ENCODE measurements at regions of chr4 and their contacts with region 1.

Region 1: GRCh38 chr4:110019153-110019552 is 106.5 kb downstream of the EGF start:
- DNase-seq: no peak
- ATAC-seq: no peak
- H3K4me3 ChIP-seq: no peak overlapping the region
- H3K27ac ChIP-seq: no peak overlapping the region
- H3K4me1 ChIP-seq: no peaks in the 10 kb centered on the region
- H3K27me3 ChIP-seq: no peaks in the 10 kb centered on the region
- CTCF ChIP-seq: no peak

Region 2: GRCh38 chr4:110155654-110156053 is 136.5 kb after region 1 on chr4:
- CTCF ChIA-PET with region 1: no interaction called
- POLR2A ChIA-PET with region 1: no interaction called
- intact Hi-C with region 1: no loop called
- DNase-seq: no peak
- ATAC-seq: no peak
- H3K4me3 ChIP-seq: no peak overlapping the region
- H3K27ac ChIP-seq: no peak overlapping the region
- H3K4me1 ChIP-seq: peaks cover 23% of the 10 kb centered on the region
- H3K27me3 ChIP-seq: no peaks in the 10 kb centered on the region
- CTCF ChIP-seq: no peak

Region 3: GRCh38 chr4:110886270-110886669 is 867.1 kb after region 1 on chr4:
- CTCF ChIA-PET with region 1: no interaction called
- POLR2A ChIA-PET with region 1: no interaction called
- intact Hi-C with region 1: loop called (anchors 10 kb)
- DNase-seq: no peak
- ATAC-seq: no peak
- H3K4me3 ChIP-seq: no peak overlapping the region
- H3K27ac ChIP-seq: no peak overlapping the region
- H3K4me1 ChIP-seq: no peaks in the 10 kb centered on the region
- H3K27me3 ChIP-seq: no peaks in the 10 kb centered on the region
- CTCF ChIP-seq: no peak